ENCODE measurements at regions of chr4 and their contacts with region 1.

Region 1: GRCh38 chr4:152605641-152606335 is 69.9 kb upstream of the FBXW7 start:
- DNase-seq: peak; percentile 34
- ATAC-seq: peak; percentile 57; the same call in 1 of the 2 replicates
- H3K4me3 ChIP-seq: no peak overlapping the region
- H3K27ac ChIP-seq: no peak overlapping the region
- H3K4me1 ChIP-seq: peaks cover 2% of the 10 kb centered on the region; the same call in 1 of the 2 replicates
- H3K27me3 ChIP-seq: peaks cover 11% of the 10 kb centered on the region
- CTCF ChIP-seq: no peak
- POLR2A ChIP-seq: no peak
- RAD21 ChIP-seq: no peak

Region 2: DNA sequence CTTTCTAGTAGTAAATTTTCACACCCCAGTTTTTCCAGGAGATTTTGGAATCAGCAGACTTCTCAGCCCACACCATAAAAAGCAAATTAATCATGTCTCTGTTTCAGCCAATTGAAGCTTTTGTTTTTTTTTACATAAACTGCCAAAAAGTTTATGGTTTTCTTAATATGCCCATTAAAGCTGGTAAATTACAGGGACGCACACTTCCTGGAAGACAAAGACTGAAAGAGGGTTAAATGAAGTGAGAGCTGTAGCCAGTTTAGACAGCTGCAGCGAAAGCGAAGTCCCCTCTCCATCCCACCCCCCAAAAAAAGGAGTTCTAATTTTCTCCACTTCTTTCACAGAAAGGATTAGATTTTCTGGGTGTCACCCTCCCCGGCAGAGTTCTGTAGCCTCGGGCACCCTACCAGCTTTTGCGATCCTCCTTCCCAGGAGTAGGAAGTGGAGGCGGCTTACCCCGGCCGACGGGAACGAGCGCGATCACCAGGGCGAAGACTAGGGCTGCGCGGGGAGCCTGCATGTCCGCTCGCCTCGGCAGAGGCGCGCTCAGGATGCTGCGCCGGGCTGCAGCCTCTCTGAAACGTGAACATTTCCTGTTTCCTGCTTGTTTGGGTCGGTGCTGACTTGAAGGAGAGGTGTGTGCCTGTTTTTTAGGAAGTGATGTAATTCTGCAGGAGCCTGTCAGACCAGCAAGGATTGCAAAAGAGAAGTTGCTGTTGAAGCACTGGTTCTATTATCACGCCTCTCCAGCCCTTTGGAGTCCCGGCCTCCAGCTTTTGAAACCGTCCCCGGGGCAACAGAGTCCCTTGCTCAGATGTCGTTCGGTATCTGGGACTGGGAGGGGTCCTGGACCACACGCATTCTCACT is 73.9 kb after region 1 on chr4 and contains the start of gene TMEM154:
- CTCF ChIA-PET with region 1: no interaction called
- POLR2A ChIA-PET with region 1: interaction called, 17 read pairs
- dilution Hi-C with region 1: no loop called
- in situ Hi-C with region 1: no loop called
- intact Hi-C with region 1: no loop called
- DNase-seq: peak; percentile 53
- ATAC-seq: peak; percentile 95
- H3K4me3 ChIP-seq: peak within 1 kb of the TSS; percentile 41
- H3K27ac ChIP-seq: no peak within 1 kb of the TSS
- H3K4me1 ChIP-seq: no peaks in the 10 kb centered on the region
- H3K27me3 ChIP-seq: peaks cover 12% of the 10 kb centered on the region
- CTCF ChIP-seq: no peak
- POLR2A ChIP-seq: no peak
- RAD21 ChIP-seq: no peak
- total RNA-seq, gene TMEM154: 0.18 and 0.28 TPM in 2 replicates

Region 3: GRCh38 chr4:152784490-152785350 is 178.9 kb after region 1 on chr4:
- CTCF ChIA-PET with region 1: no interaction called
- POLR2A ChIA-PET with region 1: no interaction called
- dilution Hi-C with region 1: no loop called
- in situ Hi-C with region 1: no loop called
- intact Hi-C with region 1: no loop called
- DNase-seq: peak; percentile 40
- ATAC-seq: no peak
- H3K4me3 ChIP-seq: no peak overlapping the region
- H3K27ac ChIP-seq: no peak overlapping the region
- H3K4me1 ChIP-seq: no peaks in the 10 kb centered on the region
- H3K27me3 ChIP-seq: no peaks in the 10 kb centered on the region
- CTCF ChIP-seq: peak; percentile 18; the same call in 1 of the 2 replicates
- POLR2A ChIP-seq: no peak
- RAD21 ChIP-seq: no peak

Region 4: GRCh38 chr4:153522802-153523094 is 917.0 kb after region 1 on chr4:
- CTCF ChIA-PET with region 1: no interaction called
- POLR2A ChIA-PET with region 1: no interaction called
- dilution Hi-C with region 1: no loop called
- in situ Hi-C with region 1: no loop called
- intact Hi-C with region 1: no loop called
- DNase-seq: no peak
- ATAC-seq: no peak
- H3K4me3 ChIP-seq: no peak overlapping the region
- H3K27ac ChIP-seq: no peak overlapping the region
- H3K4me1 ChIP-seq: peaks cover 6% of the 10 kb centered on the region
- H3K27me3 ChIP-seq: no peaks in the 10 kb centered on the region
- CTCF ChIP-seq: no peak
- POLR2A ChIP-seq: no peak
- RAD21 ChIP-seq: no peak